ENCODE measurements at regions of chr17 and their contacts with region 1.

Region 1: GRCh38 chr17:41548844-41549595 is 20.9 kb upstream of the KRT19 start:
- DNase-seq: peak; percentile 84
- ATAC-seq: peak; percentile 87 to 89

Region 2: GRCh38 chr17:40909351-40909750 is 639.7 kb before region 1 on chr17:
- intact Hi-C with region 1: loop called (anchors 2 to 10 kb)
- DNase-seq: peak; percentile 72
- ATAC-seq: peak; percentile 87 to 97

Region 3: GRCh38 chr17:40915199-40915661 is 633.8 kb before region 1 on chr17:
- intact Hi-C with region 1: loop called (anchors 2 to 10 kb)
- DNase-seq: no peak
- ATAC-seq: peak in 1 of 2 donors; percentile 90

Region 4: GRCh38 chr17:41496820-41497408 is 52.1 kb before region 1 on chr17:
- intact Hi-C with region 1: no loop called
- DNase-seq: peak; percentile 76
- ATAC-seq: peak; percentile 84 to 90

Region 5: DNA sequence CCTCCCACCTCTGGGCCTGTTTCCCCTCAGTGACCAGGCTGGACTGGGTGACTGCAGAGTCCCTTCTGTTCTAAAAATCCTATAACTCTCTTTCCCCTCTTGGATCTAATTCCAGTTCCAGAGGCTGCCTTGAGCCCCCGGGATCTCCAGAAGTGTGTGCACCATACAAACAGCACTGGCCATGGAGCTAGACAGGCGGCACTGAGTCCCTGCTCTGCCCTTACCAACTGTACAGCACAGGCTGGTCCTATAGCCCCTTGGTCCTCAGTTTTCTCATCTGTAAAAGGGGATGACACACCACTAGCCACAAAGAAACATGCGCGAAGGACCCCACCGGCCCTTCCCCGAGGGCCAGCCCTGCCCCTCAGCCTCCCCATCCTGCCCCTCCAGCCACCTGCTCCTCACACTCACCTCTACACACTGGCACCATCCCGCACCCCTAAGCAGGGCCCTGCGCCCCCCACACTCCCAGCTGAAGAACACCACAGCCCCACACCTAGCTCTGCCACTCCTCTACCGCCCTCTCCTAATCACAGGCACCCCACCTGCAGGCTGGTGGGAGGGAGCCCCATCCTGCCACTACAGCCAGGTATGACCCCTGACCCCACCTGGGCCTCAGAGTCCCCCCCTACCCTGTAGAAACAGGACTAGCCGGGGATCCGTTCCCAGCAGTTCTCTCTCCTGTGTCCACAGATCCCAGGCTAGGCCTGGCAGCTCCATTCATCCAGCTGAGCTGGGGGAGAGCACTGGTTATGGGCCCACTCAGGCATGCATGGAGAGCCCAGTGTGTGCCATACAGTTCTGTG is 64.5 kb after region 1 on chr17:
- intact Hi-C with region 1: no loop called
- DNase-seq: no peak
- ATAC-seq: no peak

Region 6: GRCh38 chr17:41648411-41649195 is 99.6 kb after region 1 on chr17:
- intact Hi-C with region 1: loop called (anchors 2 to 5 kb)
- DNase-seq: peak; percentile 87
- ATAC-seq: peak; percentile 93 to 97

Region 7: DNA sequence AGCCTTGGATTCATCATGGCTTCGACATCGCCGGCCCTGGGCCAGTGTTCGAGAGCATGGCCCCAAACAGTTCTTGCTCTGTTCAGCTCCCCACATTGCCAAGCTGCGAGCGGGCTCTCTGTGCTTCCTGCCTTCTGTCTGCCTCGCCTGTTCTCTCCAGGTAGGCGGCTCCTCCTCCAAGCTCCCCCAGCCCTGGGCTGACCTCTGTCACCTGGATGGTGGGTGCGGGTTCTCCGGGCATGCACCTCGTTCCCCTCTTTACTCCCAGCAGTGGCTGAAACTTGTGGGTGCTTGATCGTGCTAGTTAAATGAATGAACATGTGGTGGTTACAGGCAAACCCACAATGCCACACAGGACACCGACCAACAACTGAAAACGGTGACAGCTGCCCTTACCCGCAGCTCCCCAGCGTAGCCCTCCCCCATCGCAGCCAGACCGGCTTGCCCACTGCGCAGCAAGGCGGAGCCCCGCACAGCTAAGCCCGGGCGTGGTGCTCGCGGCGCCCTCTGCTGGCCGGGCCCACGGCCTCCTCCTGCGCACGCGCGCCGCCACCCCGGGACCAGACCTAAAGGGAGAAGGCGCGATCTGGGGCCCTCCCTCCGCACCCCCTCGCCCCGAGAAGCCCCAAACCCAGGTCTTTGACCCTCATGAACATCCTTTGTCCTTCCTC is 116.7 kb after region 1 on chr17:
- intact Hi-C with region 1: loop called in 1 of 2 experiments (anchors 5 kb)
- DNase-seq: peak; percentile 91
- ATAC-seq: peak; percentile 95

Region 8: DNA sequence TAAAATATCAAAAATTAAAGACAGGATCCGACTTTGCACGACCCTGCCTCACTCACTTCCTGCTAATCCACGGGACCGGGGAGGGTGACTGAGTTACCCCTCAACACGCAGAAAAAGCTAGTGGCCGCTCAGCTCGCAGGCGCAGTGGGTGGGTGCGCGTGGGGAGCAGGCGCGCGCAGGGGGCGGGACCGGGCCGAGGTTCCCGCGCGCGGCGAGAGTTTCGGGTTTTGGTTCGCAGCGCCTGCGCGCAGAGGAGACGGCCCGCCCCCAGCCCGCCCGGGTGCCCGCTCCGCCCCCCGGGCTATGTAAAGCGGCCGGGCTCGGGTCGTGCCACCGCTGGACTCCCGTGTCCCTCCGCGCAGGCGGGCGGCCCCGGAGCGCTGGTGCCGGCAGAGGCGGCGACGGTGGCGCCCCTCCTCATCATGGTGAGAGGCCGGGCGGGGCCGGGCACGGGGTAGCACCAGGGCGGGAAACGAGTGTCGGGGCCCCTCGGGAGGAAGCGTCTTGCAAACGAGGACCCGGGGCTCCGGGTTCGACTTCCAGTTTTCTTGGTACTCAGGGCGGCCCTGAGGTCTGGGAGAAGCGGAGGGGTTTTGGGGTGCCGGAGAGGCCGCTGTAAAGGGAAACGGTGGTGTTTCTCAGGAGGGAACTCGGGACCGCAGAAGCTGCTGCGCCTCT is 417.6 kb after region 1 on chr17 and contains the start of gene CNP:
- intact Hi-C with region 1: no loop called
- DNase-seq: peak; percentile 93
- ATAC-seq: peak; percentile 94 to 95
- total RNA-seq, gene CNP: 40.3 to 43.7 TPM

Measured in left cardiac atrium (tissue), 4 donors.